Mucosa of descending colon (tissue), 3 donors: ENCODE measurements at regions of chr3 and their contacts with region 1.

Region 1: DNA sequence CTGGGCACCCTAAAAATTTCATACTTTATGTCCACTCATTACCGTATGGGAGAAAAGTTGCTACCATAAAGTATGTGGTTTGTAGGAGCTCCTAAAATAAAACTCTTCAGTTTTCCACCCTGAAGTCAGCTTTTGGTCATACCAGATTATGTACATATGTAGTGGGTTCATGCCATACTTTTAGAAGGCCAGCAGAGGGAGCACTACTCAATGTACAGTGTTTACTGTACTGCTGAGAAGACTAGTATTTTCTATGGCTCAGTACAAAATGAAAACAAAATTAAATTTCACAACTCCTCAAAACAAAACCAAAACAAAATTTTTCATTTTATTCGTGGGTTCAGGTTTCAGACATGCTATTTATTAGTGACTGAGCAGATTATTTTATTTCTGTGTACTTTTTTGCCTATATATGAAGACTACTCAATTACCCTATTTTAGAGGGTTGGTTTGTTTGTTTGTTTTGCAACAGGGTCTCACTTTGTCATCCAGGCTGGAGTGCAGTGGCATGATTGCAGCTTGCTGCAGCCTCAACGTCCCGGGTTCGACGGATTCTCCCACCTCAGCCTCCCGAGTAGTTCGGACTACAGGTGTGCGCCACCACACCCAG is 24.3 kb downstream of the NXPE3 start:
- DNase-seq: peak in 1 of 3 donors; percentile 56
- ATAC-seq: peak; percentile 98
- H3K4me3 ChIP-seq: no peak overlapping the region
- H3K4me1 ChIP-seq: peaks cover 12% of the 10 kb centered on the region
- CTCF ChIP-seq: peak; percentile 75

Region 2: DNA sequence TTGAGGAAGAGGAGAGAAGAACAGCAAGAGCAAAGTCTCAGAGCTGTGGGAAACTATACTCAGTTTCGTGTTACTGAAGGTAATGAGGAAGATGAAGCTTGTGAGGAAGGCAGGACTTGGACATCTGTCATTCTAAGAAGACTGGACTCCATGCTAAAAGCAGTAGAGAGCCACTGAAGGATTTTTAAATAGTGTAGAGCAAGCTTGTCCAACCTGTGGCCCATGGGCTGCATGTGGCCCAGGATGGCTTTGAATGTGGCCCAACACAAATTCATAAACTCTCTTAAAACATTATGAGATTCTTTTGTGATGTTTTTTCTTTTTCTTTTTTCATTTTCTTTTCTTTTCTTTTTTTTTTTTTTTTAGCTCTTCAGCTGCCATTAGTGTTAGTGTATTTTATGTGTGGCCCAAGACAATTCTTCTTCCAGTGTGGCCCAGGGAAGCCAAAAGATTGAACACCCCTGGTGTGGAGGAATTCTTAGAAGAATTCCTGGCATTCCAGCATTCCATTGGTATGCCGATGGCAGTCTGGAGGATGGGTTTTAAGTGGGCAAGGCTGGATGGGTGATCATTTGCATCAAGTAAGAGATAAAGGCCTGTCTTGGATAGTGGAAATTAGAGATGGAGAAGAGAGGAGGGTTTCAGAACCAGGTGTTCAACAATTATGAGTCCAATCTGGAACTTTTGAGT is 39.1 kb after region 1 on chr3:
- intact Hi-C with region 1: no loop called
- DNase-seq: no peak
- ATAC-seq: no peak
- H3K4me3 ChIP-seq: no peak overlapping the region
- H3K4me1 ChIP-seq: peaks cover 25% of the 10 kb centered on the region
- CTCF ChIP-seq: no peak

Region 3: DNA sequence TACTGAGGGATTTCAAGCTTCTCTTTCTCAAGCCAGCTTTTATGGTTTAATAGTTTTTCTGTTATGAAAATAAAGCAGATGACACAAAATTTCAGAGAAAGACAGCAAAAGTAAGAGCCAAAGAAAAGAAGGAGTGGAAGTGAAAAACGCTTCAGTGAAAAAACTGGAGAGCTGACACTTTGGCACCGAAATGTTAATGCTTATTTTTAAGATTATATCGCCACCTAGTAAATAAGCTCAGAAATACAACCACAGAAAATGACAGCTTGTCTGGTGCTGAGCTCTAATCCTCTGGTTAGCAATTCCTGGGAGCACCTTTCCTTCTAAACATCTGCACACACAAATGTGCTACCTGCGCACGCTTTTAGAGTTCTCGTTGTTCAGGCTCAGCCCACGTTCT is 733.2 kb after region 1 on chr3:
- intact Hi-C with region 1: loop called in 1 of 2 experiments (anchors 10 kb)
- DNase-seq: no peak
- ATAC-seq: peak; percentile 45
- H3K4me3 ChIP-seq: no peak overlapping the region
- H3K4me1 ChIP-seq: no peaks in the 10 kb centered on the region
- CTCF ChIP-seq: no peak